Esophagus muscularis mucosa (tissue), 4 donors: ENCODE measurements at regions of chr10 and their contacts with region 1.

Region 1: GRCh38 chr10:107157071-107157470 is 7.4 kb downstream of the SORCS1 start:
- DNase-seq: no peak
- H3K4me3 ChIP-seq: no peak overlapping the region
- H3K27ac ChIP-seq: no peak overlapping the region
- H3K4me1 ChIP-seq: no peaks in the 10 kb centered on the region
- H3K27me3 ChIP-seq: peaks cover 0 to 3% (median 0%) of the 10 kb centered on the region in 4 donors
- CTCF ChIP-seq: no peak
- EP300 ChIP-seq: no peak
- POLR2A ChIP-seq: no peak

Region 2: DNA sequence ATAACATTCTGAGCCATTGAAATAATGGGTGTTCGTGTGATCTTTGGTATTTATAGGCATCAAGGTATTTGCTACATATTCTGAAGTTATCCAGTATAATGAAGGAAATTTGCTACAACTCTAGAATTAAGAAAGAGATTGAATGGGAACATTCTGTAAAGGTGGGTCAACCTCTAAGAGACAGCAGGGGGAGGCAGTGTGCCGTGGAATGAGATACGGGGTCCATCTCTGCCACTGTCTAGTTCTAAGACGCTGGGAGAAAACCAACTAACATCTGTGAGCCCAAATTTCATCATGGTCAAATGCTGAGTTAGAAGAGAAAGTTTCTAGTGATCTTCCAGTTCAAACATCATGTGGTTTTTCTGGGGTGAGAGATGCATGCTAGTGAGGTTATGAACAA is 361.5 kb before region 1 on chr10:
- intact Hi-C with region 1: loop called (anchors 10 kb)
- DNase-seq: no peak
- H3K4me3 ChIP-seq: no peak overlapping the region
- H3K27ac ChIP-seq: no peak overlapping the region
- H3K4me1 ChIP-seq: peaks cover 0 to 10% (median 2%) of the 10 kb centered on the region in 4 donors
- H3K27me3 ChIP-seq: no peaks in the 10 kb centered on the region
- CTCF ChIP-seq: peak; percentile 52 to 54 (median 53)
- EP300 ChIP-seq: no peak
- POLR2A ChIP-seq: no peak

Region 3: GRCh38 chr10:107103174-107104025 is 53.7 kb before region 1 on chr10:
- intact Hi-C with region 1: no loop called
- DNase-seq: no peak
- H3K4me3 ChIP-seq: no peak overlapping the region
- H3K27ac ChIP-seq: no peak overlapping the region
- H3K4me1 ChIP-seq: peaks cover 12 to 24% (median 23%) of the 10 kb centered on the region in 4 donors
- H3K27me3 ChIP-seq: no peaks in the 10 kb centered on the region
- CTCF ChIP-seq: no peak
- EP300 ChIP-seq: no peak
- POLR2A ChIP-seq: no peak